ENCODE measurements at regions of chr2 and their contacts with region 1.

Region 1: GRCh38 chr2:38146275-38146906 is 70.4 kb upstream of the CYP1B1 start:
- DNase-seq: peak; percentile 17 to 65
- ATAC-seq: peak; percentile 71 to 94 (median 84)
- H3K4me3 ChIP-seq: peak overlapping the region in 1 of 10 donors; percentile 13
- H3K27ac ChIP-seq: peak overlapping the region; percentile 15 to 91 (median 77)
- H3K4me1 ChIP-seq: peaks cover 0 to 56% (median 12%) of the 10 kb centered on the region in 9 donors
- H3K27me3 ChIP-seq: no peaks in the 10 kb centered on the region
- CTCF ChIP-seq: no peak

Region 2: DNA sequence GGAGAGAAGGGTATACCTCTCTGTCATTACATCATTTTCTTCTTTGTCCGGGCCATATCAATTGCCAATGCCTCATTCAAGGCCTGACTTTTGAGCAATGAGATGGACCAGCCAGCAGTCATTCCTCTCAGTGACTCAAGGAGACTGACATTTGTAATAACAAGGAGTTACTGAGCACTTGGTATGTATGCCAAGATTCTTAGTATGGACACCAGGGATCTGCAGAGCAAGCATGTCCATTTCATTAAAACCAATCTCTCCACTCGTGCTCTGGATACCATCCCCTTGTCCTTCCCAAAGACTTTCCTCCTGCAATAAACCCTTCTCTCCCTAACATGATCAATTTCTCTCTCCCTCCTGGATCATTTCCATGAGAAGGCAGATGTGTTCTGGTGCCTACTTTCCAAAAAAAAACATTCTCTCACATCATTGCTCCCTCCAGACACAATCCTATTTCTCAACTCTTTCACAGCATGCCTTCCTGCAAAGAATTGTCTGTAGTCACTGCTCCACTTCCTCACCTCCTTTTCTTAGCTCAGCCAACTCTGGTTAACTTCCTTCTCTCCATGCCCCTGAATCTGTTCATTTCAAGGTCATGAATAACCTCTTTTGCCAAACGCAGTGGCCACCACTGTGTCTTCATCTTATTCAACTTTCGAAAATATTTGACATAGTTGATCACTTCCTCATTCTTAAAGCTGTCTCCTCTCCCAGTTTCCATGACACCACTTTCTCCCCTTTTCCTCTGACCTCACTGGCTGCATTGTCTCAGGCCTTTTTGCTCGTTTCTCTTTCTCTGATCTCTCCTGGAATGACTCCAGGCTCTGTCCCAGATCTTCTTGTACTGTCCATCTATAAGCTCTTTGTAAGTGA is 32.4 kb after region 1 on chr2:
- intact Hi-C with region 1: loop called in 1 of 10 experiments (anchors 1 kb)
- DNase-seq: peak in 1 of 2 donors; percentile 23
- ATAC-seq: peak in 6 of 8 donors; percentile 17 to 72 (median 46)
- H3K4me3 ChIP-seq: no peak overlapping the region
- H3K27ac ChIP-seq: peak overlapping the region in 9 of 10 donors; percentile 37 to 88 (median 58)
- H3K4me1 ChIP-seq: peaks cover 0 to 63% (median 6%) of the 10 kb centered on the region in 9 donors
- H3K27me3 ChIP-seq: no peaks in the 10 kb centered on the region
- CTCF ChIP-seq: no peak

Measured in heart right ventricle (tissue), 16 donors.